PC-9 (cell line): ENCODE measurements at regions of chrX and their contacts with region 1.

Region 1: GRCh38 chrX:81377329-81377728 is 175.4 kb downstream of the SH3BGRL start:
- DNase-seq: no peak
- H3K4me3 ChIP-seq: no peak overlapping the region
- H3K27ac ChIP-seq: no peak overlapping the region
- H3K4me1 ChIP-seq: no peaks in the 10 kb centered on the region
- H3K27me3 ChIP-seq: no peaks in the 10 kb centered on the region
- CTCF ChIP-seq: peak; percentile 58

Region 2: GRCh38 chrX:80876877-80877276 is 500.5 kb before region 1 on chrX:
- CTCF ChIA-PET with region 1: no interaction called
- POLR2A ChIA-PET with region 1: no interaction called
- intact Hi-C with region 1: loop called (anchors 10 kb)
- DNase-seq: no peak
- H3K4me3 ChIP-seq: no peak overlapping the region
- H3K27ac ChIP-seq: no peak overlapping the region
- H3K4me1 ChIP-seq: no peaks in the 10 kb centered on the region
- H3K27me3 ChIP-seq: no peaks in the 10 kb centered on the region
- CTCF ChIP-seq: peak; percentile 70

Region 3: DNA sequence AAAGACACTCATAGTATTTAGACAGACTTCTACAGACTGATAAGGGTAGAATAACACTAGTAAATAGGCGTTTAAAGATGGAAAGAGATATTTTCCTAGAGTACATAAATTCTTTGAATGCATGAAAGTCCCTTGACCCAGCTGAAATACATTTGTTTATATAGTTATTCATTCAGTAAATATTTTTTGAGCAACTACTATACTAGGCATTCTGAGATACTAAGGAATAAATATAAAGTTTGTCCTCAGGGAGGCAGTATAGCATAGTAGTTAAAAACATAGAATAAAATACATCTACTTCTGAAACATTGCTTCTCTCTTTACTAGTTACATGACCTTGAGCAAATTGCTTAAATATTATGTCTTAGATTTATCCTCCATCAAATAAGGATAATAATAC is 203.0 kb before region 1 on chrX:
- CTCF ChIA-PET with region 1: interaction called, 3 read pairs
- POLR2A ChIA-PET with region 1: no interaction called
- intact Hi-C with region 1: loop called (anchors 2 kb)
- DNase-seq: no peak
- H3K4me3 ChIP-seq: no peak overlapping the region
- H3K27ac ChIP-seq: no peak overlapping the region
- H3K4me1 ChIP-seq: no peaks in the 10 kb centered on the region
- H3K27me3 ChIP-seq: no peaks in the 10 kb centered on the region
- CTCF ChIP-seq: peak; percentile 32; the same call in 1 of the 2 replicates